IMR-90 (cell line): ENCODE measurements at regions of chr19 and their contacts with region 1.

Region 1: GRCh38 chr19:5170329-5170745 is 170.3 kb downstream of the PTPRS start:
- DNase-seq: no peak
- ATAC-seq: no peak
- H3K4me3 ChIP-seq: no peak overlapping the region
- H3K27ac ChIP-seq: no peak overlapping the region
- H3K4me1 ChIP-seq: peaks cover 5% of the 10 kb centered on the region; the same call in 1 of the 2 replicates
- H3K27me3 ChIP-seq: no peaks in the 10 kb centered on the region
- CTCF ChIP-seq: peak; percentile 33; the same call in 1 of the 2 replicates
- POLR2A ChIP-seq: no peak
- RAD21 ChIP-seq: no peak

Region 2: DNA sequence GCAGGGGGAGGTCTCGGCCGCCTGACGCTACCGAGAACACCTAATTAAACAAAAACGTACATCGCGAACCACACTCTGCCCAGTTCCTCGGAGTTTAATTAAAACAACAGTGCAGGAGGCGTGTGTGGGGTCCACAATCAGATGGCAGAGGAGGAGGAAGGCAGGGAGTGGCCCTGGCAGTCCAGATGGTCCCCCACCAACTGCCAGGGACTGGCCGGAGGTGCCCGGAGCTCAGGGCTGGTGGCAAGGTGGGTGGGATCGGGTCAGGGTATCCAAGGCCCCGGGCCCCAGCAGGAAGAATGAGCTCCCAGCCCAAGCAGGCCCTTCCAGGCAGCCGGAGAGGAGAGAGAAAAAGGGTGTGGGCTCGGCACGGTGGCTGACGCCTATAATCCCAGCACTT is 98.9 kb after region 1 on chr19:
- CTCF ChIA-PET with region 1: no interaction called
- POLR2A ChIA-PET with region 1: interaction called, 12 read pairs
- dilution Hi-C with region 1: no loop called
- in situ Hi-C with region 1: no loop called
- intact Hi-C with region 1: no loop called
- DNase-seq: no peak
- ATAC-seq: no peak
- H3K4me3 ChIP-seq: no peak overlapping the region
- H3K27ac ChIP-seq: no peak overlapping the region
- H3K4me1 ChIP-seq: no peaks in the 10 kb centered on the region
- H3K27me3 ChIP-seq: no peaks in the 10 kb centered on the region
- CTCF ChIP-seq: no peak
- POLR2A ChIP-seq: no peak
- RAD21 ChIP-seq: no peak

Region 3: GRCh38 chr19:5340637-5341447 is 170.5 kb after region 1 on chr19 and contains the start of gene PTPRS:
- CTCF ChIA-PET with region 1: no interaction called
- POLR2A ChIA-PET with region 1: no interaction called
- dilution Hi-C with region 1: no loop called
- in situ Hi-C with region 1: no loop called
- intact Hi-C with region 1: loop called (anchors 10 kb)
- DNase-seq: peak; percentile 74
- ATAC-seq: peak; percentile 93
- H3K4me3 ChIP-seq: peak within 1 kb of the TSS; percentile 78
- H3K27ac ChIP-seq: peak within 1 kb of the TSS; percentile 32; the same call in 1 of the 2 replicates
- H3K4me1 ChIP-seq: peaks cover 6% of the 10 kb centered on the region
- H3K27me3 ChIP-seq: peaks cover 5% of the 10 kb centered on the region; the same call in 1 of the 2 replicates
- CTCF ChIP-seq: no peak
- POLR2A ChIP-seq: no peak
- RAD21 ChIP-seq: 0 out of 2 replicates have a peak, but pooled peaks have one; percentile 1
- total RNA-seq, gene PTPRS: 40.1 and 43.3 TPM in 2 replicates